Left ventricle myocardium superior (tissue), 1 donor: ENCODE measurements at regions of chr7 and their contacts with region 1.

Region 1: GRCh38 chr7:23181684-23182553 is at the start of gene NUP42:
- DNase-seq: peak; percentile 94
- ATAC-seq: peak; percentile 95
- total RNA-seq, gene NUP42: 26.6 TPM

Region 2: DNA sequence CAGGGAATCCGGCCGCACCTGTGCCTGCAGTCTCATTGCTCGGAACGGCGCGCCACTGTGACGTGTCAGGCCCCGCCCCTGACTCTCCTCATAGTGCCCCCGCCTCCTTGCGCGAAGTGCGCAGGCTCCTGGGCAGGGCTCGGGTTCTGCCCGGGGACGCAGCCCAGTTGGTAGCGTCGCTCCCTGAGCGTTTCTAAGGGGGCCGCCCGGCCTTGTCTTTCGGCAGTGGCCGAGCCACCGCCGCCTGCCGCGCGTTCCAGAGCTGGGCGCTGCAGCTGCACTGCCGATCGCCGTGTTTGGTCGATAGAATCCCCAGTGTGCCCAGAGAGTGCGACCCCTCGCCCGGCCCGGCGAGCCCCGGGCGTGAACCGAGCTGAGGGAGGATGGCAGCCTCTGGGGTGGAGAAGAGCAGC is 76.3 kb before region 1 on chr7 and contains the start of gene KLHL7:
- intact Hi-C with region 1: loop called (anchors 10 kb)
- DNase-seq: peak; percentile 99
- ATAC-seq: peak; percentile 96
- total RNA-seq, gene KLHL7: 195 TPM